ENCODE measurements at regions of chr19 and their contacts with region 1.

Region 1: GRCh38 chr19:56076498-56076897 is 44.6 kb downstream of the ZNF787 start:
- DNase-seq: peak; percentile 48
- ATAC-seq: peak; percentile 49
- H3K4me3 ChIP-seq: no peak overlapping the region
- H3K27ac ChIP-seq: no peak overlapping the region
- H3K4me1 ChIP-seq: peaks cover 20% of the 10 kb centered on the region
- H3K27me3 ChIP-seq: no peaks in the 10 kb centered on the region; a peak in 1 of 5 replicates
- CTCF ChIP-seq: peak; percentile 87
- EP300 ChIP-seq: no peak
- POLR2A ChIP-seq: no peak
- RAD21 ChIP-seq: peak; percentile 63

Region 2: DNA sequence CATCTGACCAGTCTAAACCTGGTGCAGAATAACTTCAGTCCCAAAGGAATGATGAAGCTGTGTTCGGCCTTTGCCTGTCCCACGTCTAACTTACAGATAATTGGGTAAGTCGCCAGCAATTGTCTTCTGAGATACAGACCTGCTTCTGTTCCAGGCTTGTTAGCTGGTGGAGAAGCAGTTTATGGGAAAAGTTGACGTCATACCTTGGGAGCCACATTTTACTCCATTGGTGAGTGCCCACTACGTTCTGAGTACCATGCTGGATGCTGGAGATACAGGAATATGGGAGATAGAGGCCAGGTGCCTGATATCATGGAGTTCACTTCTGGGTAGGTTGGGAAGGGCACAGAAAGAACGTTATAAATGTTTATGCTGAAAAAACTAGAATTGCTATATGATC is 18.2 kb before region 1 on chr19:
- CTCF ChIA-PET with region 1: no interaction called
- POLR2A ChIA-PET with region 1: no interaction called
- in situ Hi-C with region 1: no loop called
- intact Hi-C with region 1: no loop called
- DNase-seq: no peak
- ATAC-seq: no peak
- H3K4me3 ChIP-seq: no peak overlapping the region
- H3K27ac ChIP-seq: no peak overlapping the region
- H3K4me1 ChIP-seq: peaks cover 9% of the 10 kb centered on the region
- H3K27me3 ChIP-seq: peaks cover 4 to 27% of the 10 kb centered on the region in 2 experiments
- CTCF ChIP-seq: no peak
- EP300 ChIP-seq: no peak
- POLR2A ChIP-seq: no peak
- RAD21 ChIP-seq: no peak

Region 3: GRCh38 chr19:56155124-56155687 is 78.7 kb after region 1 on chr19:
- CTCF ChIA-PET with region 1: no interaction called
- POLR2A ChIA-PET with region 1: no interaction called
- in situ Hi-C with region 1: no loop called
- intact Hi-C with region 1: no loop called
- DNase-seq: no peak
- ATAC-seq: peak; percentile 67
- H3K4me3 ChIP-seq: no peak overlapping the region
- H3K27ac ChIP-seq: no peak overlapping the region
- H3K4me1 ChIP-seq: peaks cover 28% of the 10 kb centered on the region
- H3K27me3 ChIP-seq: no peaks in the 10 kb centered on the region
- CTCF ChIP-seq: peak; percentile 76
- EP300 ChIP-seq: no peak
- POLR2A ChIP-seq: no peak
- RAD21 ChIP-seq: peak; percentile 68

Region 4: GRCh38 chr19:56314562-56315077 is 238.1 kb after region 1 on chr19 and contains the start of gene ZSCAN5A:
- CTCF ChIA-PET with region 1: interaction called, 6 read pairs
- POLR2A ChIA-PET with region 1: no interaction called
- in situ Hi-C with region 1: loop called (anchors 10 kb)
- intact Hi-C with region 1: no loop called
- DNase-seq: peak; percentile 89
- ATAC-seq: peak; percentile 88
- H3K4me3 ChIP-seq: peak within 1 kb of the TSS; percentile 81 to 87 (median 82)
- H3K27ac ChIP-seq: peak within 1 kb of the TSS; percentile 96
- H3K4me1 ChIP-seq: peaks cover 44% of the 10 kb centered on the region
- H3K27me3 ChIP-seq: no peaks in the 10 kb centered on the region; a peak in 1 of 5 replicates
- CTCF ChIP-seq: no peak
- EP300 ChIP-seq: peak in 1 of 2 experiments; percentile 8; a peak in 1 of 4 replicates
- POLR2A ChIP-seq: peak; percentile 50 to 65
- RAD21 ChIP-seq: 0 out of 2 replicates have a peak, but pooled peaks have one; percentile 17
- total RNA-seq, gene ZSCAN5A: 17.8 and 23.7 TPM in 2 replicates

Measured in HepG2 (cell line).